ENCODE measurements at regions of chr1 and their contacts with region 1.

Region 1: DNA sequence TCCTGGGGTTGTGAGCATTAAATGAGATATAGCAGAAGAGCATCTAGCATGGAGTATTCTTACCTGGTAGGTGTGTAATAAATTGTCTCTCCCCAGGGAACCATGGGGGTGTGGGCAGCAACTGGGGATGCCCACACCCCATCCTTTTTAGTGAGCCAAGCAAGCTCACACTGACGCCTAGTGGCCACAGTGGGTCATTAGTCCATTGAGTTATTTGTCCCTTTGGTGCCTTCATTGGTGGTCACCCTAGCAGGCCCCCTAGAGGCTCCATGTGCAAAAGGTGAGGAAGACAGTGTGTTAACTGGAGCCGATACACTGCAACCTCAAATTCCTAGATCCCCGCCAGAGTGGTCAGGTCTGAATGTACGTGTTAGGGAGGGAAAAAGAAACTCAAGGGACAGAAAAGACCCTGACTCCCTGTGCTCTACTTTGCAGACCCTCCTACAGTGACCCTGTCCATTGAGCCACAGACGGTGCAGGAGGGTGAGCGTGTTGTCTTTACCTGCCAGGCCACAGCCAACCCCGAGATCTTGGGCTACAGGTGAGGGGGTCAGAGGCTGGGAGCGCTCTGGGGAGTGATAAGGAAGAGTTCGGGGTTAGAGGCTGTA is 93.3 kb upstream of the CD1D start:
- DNase-seq: peak; percentile 63 to 84
- H3K4me3 ChIP-seq: no peak overlapping the region
- H3K27ac ChIP-seq: 0 out of 2 replicates have a peak overlapping the region, but pooled peaks have one; percentile 10
- H3K4me1 ChIP-seq: peaks cover 0 to 3% (median under 1%) of the 10 kb centered on the region in 4 experiments; a peak in 3 of 7 replicates
- H3K27me3 ChIP-seq: no peaks in the 10 kb centered on the region
- CTCF ChIP-seq: peak; percentile 83 to 100 (median 99)
- EP300 ChIP-seq: 0 out of 3 replicates have a peak, but pooled peaks of 1 of the 2 experiments have one; percentile 33
- POLR2A ChIP-seq: no peak
- RAD21 ChIP-seq: peak; percentile 95 to 97

Region 2: GRCh38 chr1:157932069-157932468 is 155.4 kb before region 1 on chr1:
- CTCF ChIA-PET with region 1: no interaction called
- POLR2A ChIA-PET with region 1: no interaction called
- DNase-seq: no peak
- H3K4me3 ChIP-seq: no peak overlapping the region
- H3K27ac ChIP-seq: no peak overlapping the region
- H3K4me1 ChIP-seq: no peaks in the 10 kb centered on the region
- H3K27me3 ChIP-seq: no peaks in the 10 kb centered on the region
- CTCF ChIP-seq: no peak
- EP300 ChIP-seq: no peak
- POLR2A ChIP-seq: no peak
- RAD21 ChIP-seq: no peak

Region 3: GRCh38 chr1:157969697-157970485 is 117.5 kb before region 1 on chr1:
- CTCF ChIA-PET with region 1: interaction called, 2,918 read pairs
- POLR2A ChIA-PET with region 1: no interaction called
- DNase-seq: peak in 1 of 2 experiments; percentile 72
- H3K4me3 ChIP-seq: no peak overlapping the region
- H3K27ac ChIP-seq: no peak overlapping the region
- H3K4me1 ChIP-seq: peaks cover 0 to 8% (median 0%) of the 10 kb centered on the region in 4 experiments; a peak in 1 of 7 replicates
- H3K27me3 ChIP-seq: no peaks in the 10 kb centered on the region
- CTCF ChIP-seq: peak; percentile 31 to 96 (median 89)
- EP300 ChIP-seq: no peak
- POLR2A ChIP-seq: no peak
- RAD21 ChIP-seq: peak; percentile 87 to 90

Region 4: GRCh38 chr1:157984469-157984868 is 103.0 kb before region 1 on chr1:
- CTCF ChIA-PET with region 1: interaction called, 2,918 read pairs
- POLR2A ChIA-PET with region 1: no interaction called
- DNase-seq: no peak
- H3K4me3 ChIP-seq: no peak overlapping the region
- H3K27ac ChIP-seq: no peak overlapping the region
- H3K4me1 ChIP-seq: peaks cover 0 to 12% (median 5%) of the 10 kb centered on the region in 4 experiments; a peak in 4 of 7 replicates
- H3K27me3 ChIP-seq: no peaks in the 10 kb centered on the region
- CTCF ChIP-seq: no peak
- EP300 ChIP-seq: no peak
- POLR2A ChIP-seq: no peak
- RAD21 ChIP-seq: no peak

Region 5: DNA sequence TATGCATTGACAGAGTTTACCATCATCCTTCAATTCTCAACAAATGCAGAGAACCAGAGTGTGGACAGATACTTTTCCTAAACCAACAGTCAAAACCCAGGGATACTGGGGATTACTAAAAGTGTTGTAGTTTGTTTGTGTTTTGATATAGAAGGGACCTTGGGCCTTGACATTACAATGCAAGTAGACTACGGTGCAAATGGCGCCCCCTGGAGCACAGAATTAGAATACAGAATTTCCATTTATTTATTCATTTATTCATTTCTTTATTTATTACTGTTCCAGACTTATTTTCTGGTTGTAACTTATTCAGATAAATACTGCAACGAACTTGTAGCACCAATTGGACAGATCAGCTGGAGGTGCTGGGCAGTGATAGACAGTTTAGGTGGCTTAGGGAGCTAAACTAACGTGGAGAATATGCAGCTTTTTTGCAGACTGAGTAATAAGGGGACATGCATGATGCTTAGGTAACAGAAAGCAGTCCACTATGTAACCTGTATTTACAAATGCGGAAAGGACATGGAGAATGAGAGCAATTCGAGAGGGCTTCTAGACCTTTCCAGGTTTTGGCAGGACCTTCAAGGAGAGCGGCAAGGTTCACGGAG is 51.3 kb before region 1 on chr1:
- CTCF ChIA-PET with region 1: interaction called, 39 read pairs
- POLR2A ChIA-PET with region 1: no interaction called
- DNase-seq: no peak
- H3K4me3 ChIP-seq: no peak overlapping the region
- H3K27ac ChIP-seq: no peak overlapping the region; the same call in 1 of the 2 replicates
- H3K4me1 ChIP-seq: peaks cover 3 to 12% (median 7%) of the 10 kb centered on the region in 4 experiments
- H3K27me3 ChIP-seq: no peaks in the 10 kb centered on the region
- CTCF ChIP-seq: peak in 2 of 3 experiments; percentile 57 to 65; a peak in 3 of 4 replicates
- EP300 ChIP-seq: no peak
- POLR2A ChIP-seq: no peak
- RAD21 ChIP-seq: peak; percentile 51 to 61

Region 6: GRCh38 chr1:158055854-158056253 is 31.6 kb before region 1 on chr1:
- CTCF ChIA-PET with region 1: interaction called, 18 read pairs
- POLR2A ChIA-PET with region 1: no interaction called
- DNase-seq: no peak
- H3K4me3 ChIP-seq: no peak overlapping the region
- H3K27ac ChIP-seq: no peak overlapping the region
- H3K4me1 ChIP-seq: peaks cover 1 to 24% (median 12%) of the 10 kb centered on the region in 4 experiments
- H3K27me3 ChIP-seq: no peaks in the 10 kb centered on the region
- CTCF ChIP-seq: no peak
- EP300 ChIP-seq: no peak
- POLR2A ChIP-seq: no peak
- RAD21 ChIP-seq: no peak

Region 7: GRCh38 chr1:158075078-158075477 is 12.3 kb before region 1 on chr1:
- CTCF ChIA-PET with region 1: interaction called, 41 read pairs
- POLR2A ChIA-PET with region 1: interaction called, 5 read pairs
- DNase-seq: no peak
- H3K4me3 ChIP-seq: no peak overlapping the region
- H3K27ac ChIP-seq: no peak overlapping the region
- H3K4me1 ChIP-seq: peaks cover 0 to 38% (median 25%) of the 10 kb centered on the region in 4 experiments; a peak in 6 of 7 replicates
- H3K27me3 ChIP-seq: no peaks in the 10 kb centered on the region
- CTCF ChIP-seq: no peak
- EP300 ChIP-seq: no peak
- POLR2A ChIP-seq: no peak
- RAD21 ChIP-seq: no peak

Region 8: GRCh38 chr1:158149577-158150269 is 62.3 kb after region 1 on chr1:
- CTCF ChIA-PET with region 1: no interaction called
- POLR2A ChIA-PET with region 1: no interaction called
- DNase-seq: peak; percentile 69 to 87
- H3K4me3 ChIP-seq: peak overlapping the region; percentile 0 to 46 (median 24); a peak in 5 of 8 replicates
- H3K27ac ChIP-seq: no peak overlapping the region
- H3K4me1 ChIP-seq: no peaks in the 10 kb centered on the region; a peak in 2 of 7 replicates
- H3K27me3 ChIP-seq: peaks cover 0 to 13% (median 5%) of the 10 kb centered on the region in 4 experiments; a peak in 4 of 7 replicates
- CTCF ChIP-seq: no peak
- EP300 ChIP-seq: no peak
- POLR2A ChIP-seq: no peak
- RAD21 ChIP-seq: peak in 1 of 2 experiments; percentile 9; a peak in 1 of 4 replicates

Region 9: GRCh38 chr1:158163000-158163947 is 75.8 kb after region 1 on chr1:
- CTCF ChIA-PET with region 1: no interaction called
- POLR2A ChIA-PET with region 1: no interaction called
- DNase-seq: no peak
- H3K4me3 ChIP-seq: no peak overlapping the region
- H3K27ac ChIP-seq: no peak overlapping the region
- H3K4me1 ChIP-seq: no peaks in the 10 kb centered on the region
- H3K27me3 ChIP-seq: no peaks in the 10 kb centered on the region; a peak in 1 of 7 replicates
- CTCF ChIP-seq: no peak
- EP300 ChIP-seq: no peak
- POLR2A ChIP-seq: no peak
- RAD21 ChIP-seq: no peak